ENCODE measurements at regions of chr12 and their contacts with region 1.

Region 1: GRCh38 chr12:117367011-117367638 is 5.7 kb upstream of the NOS1 start:
- DNase-seq: peak in 4 of 5 donors; percentile 42 to 60 (median 46)
- ATAC-seq: peak in 3 of 4 donors; percentile 59 to 67 (median 62)
- H3K4me3 ChIP-seq: no peak overlapping the region
- H3K27ac ChIP-seq: no peak overlapping the region
- H3K4me1 ChIP-seq: no peaks in the 10 kb centered on the region
- H3K27me3 ChIP-seq: peaks cover 0 to 45% (median 17%) of the 10 kb centered on the region in 9 donors
- CTCF ChIP-seq: peak; percentile 72 to 87 (median 82)
- POLR2A ChIP-seq: no peak

Region 2: GRCh38 chr12:117587631-117588287 is 220.6 kb after region 1 on chr12:
- intact Hi-C with region 1: loop called (anchors 1 to 5 kb)
- DNase-seq: peak in 4 of 5 donors; percentile 19 to 53 (median 34)
- ATAC-seq: peak in 3 of 4 donors; percentile 50 to 67 (median 65)
- H3K4me3 ChIP-seq: no peak overlapping the region
- H3K27ac ChIP-seq: no peak overlapping the region
- H3K4me1 ChIP-seq: no peaks in the 10 kb centered on the region
- H3K27me3 ChIP-seq: peaks cover 0 to 43% (median 14%) of the 10 kb centered on the region in 9 donors
- CTCF ChIP-seq: peak; percentile 64 to 85 (median 80)
- POLR2A ChIP-seq: no peak

Region 3: GRCh38 chr12:117671734-117672133 is 304.6 kb after region 1 on chr12:
- intact Hi-C with region 1: loop called in 3 of 10 experiments (anchors 2 to 10 kb)
- DNase-seq: no peak
- ATAC-seq: no peak
- H3K4me3 ChIP-seq: no peak overlapping the region
- H3K27ac ChIP-seq: no peak overlapping the region
- H3K4me1 ChIP-seq: no peaks in the 10 kb centered on the region
- H3K27me3 ChIP-seq: peaks cover 0 to 32% (median 4%) of the 10 kb centered on the region in 9 donors
- CTCF ChIP-seq: peak in 10 of 12 donors; percentile 16 to 46 (median 31)
- POLR2A ChIP-seq: no peak

Measured in heart left ventricle (tissue), 16 donors.